ENCODE measurements at regions of chr22 and their contacts with region 1.

Region 1: DNA sequence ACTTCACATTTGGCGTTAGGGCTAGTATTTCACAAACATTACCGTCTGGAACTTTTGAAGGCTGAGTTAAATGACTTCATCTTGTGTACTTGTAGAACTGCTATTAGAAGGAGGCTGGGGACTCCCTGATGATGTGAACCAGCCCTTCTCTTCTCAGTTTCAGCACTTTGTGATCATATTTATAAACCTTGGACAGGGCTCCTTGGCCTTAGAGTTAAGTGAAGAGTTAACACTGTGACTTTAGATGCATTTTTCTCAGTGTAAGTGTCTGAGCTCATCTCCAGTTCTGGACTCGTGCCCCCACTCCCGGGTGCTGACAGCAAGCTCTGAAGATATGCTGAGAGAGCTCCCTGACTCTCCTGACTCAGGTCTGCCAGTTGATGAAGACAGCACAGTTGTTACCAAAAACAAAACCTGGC is 8.4 kb downstream of the MIAT start:
- DNase-seq: peak; percentile 75
- ATAC-seq: peak; percentile 71
- H3K4me3 ChIP-seq: no peak overlapping the region
- H3K27ac ChIP-seq: no peak overlapping the region
- H3K4me1 ChIP-seq: peaks cover 7% of the 10 kb centered on the region
- H3K27me3 ChIP-seq: peaks cover 2% of the 10 kb centered on the region; the same call in 1 of the 2 replicates
- CTCF ChIP-seq: no peak
- POLR2A ChIP-seq: no peak
- RAD21 ChIP-seq: 0 out of 2 replicates have a peak, but pooled peaks have one; percentile 9

Region 2: GRCh38 chr22:26364066-26365015 is 301.5 kb before region 1 on chr22:
- CTCF ChIA-PET with region 1: interaction called, 3 read pairs
- POLR2A ChIA-PET with region 1: no interaction called
- dilution Hi-C with region 1: no loop called
- in situ Hi-C with region 1: no loop called
- intact Hi-C with region 1: loop called (anchors 1 kb)
- DNase-seq: peak; percentile 80
- ATAC-seq: peak; percentile 92
- H3K4me3 ChIP-seq: no peak overlapping the region
- H3K27ac ChIP-seq: no peak overlapping the region
- H3K4me1 ChIP-seq: no peaks in the 10 kb centered on the region
- H3K27me3 ChIP-seq: peaks cover 4% of the 10 kb centered on the region; the same call in 1 of the 2 replicates
- CTCF ChIP-seq: peak; percentile 73
- POLR2A ChIP-seq: no peak
- RAD21 ChIP-seq: peak; percentile 74